IMR-90 (cell line): ENCODE measurements at regions of chr1 and their contacts with region 1.

Region 1: GRCh38 chr1:147640553-147641165 is 29.7 kb downstream of the ACP6 start:
- DNase-seq: peak; percentile 84
- ATAC-seq: peak; percentile 99
- H3K4me3 ChIP-seq: no peak overlapping the region
- H3K27ac ChIP-seq: no peak overlapping the region
- H3K4me1 ChIP-seq: no peaks in the 10 kb centered on the region
- H3K27me3 ChIP-seq: no peaks in the 10 kb centered on the region
- CTCF ChIP-seq: peak; percentile 94
- POLR2A ChIP-seq: no peak
- RAD21 ChIP-seq: peak; percentile 66

Region 2: DNA sequence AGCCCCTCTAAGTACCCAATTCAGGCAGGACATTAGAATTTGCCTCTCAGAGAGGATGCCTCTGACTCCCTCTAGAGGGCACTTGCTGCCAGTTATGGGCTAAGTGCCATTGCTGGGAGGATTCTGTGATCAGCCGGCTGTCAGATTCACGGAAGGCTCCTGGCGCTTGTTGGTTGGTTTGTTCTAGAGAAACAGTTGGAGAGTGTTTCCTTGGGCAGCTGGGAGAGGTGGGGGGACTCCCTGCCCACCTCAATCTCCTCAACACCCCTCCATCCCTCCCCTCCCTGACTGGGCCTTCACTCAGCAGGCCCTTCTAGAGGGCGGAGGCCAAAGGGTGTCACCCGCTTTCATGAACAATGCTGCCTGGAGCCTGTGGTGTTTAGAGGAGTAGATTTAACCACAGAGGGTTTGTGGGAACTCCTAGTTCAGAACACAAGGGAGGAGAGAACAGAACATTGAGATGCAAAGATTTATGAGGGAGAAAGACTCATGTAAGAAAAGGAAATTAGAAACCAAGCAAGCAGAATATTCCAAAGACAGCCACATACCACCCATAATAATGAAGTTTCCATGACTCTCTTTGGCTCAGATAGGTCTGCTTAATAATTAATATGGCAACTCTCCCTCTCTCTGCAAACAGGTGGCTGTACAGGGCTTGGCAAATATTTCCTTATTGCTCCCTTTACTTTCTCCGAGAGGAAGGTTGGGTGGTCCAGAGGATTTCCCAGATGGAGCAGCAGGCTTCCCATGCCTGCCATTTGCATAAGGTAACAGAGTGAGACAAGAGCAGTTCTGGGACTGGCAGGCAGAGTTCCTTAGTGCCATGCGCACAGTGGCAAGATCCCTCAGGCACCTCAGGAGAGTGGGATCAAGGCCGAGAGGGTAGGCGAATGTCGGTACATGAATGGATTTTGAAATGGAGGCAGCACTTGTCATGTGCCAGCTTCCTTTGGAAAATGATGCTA is 59.7 kb after region 1 on chr1:
- CTCF ChIA-PET with region 1: interaction called, 3 read pairs
- POLR2A ChIA-PET with region 1: no interaction called
- dilution Hi-C with region 1: no loop called
- in situ Hi-C with region 1: no loop called
- intact Hi-C with region 1: loop called (anchors 1 kb)
- DNase-seq: peak; percentile 64
- ATAC-seq: peak; percentile 91
- H3K4me3 ChIP-seq: no peak overlapping the region
- H3K27ac ChIP-seq: no peak overlapping the region
- H3K4me1 ChIP-seq: no peaks in the 10 kb centered on the region
- H3K27me3 ChIP-seq: peaks cover 4% of the 10 kb centered on the region
- CTCF ChIP-seq: peak; percentile 85
- POLR2A ChIP-seq: no peak
- RAD21 ChIP-seq: peak; percentile 72

Region 3: DNA sequence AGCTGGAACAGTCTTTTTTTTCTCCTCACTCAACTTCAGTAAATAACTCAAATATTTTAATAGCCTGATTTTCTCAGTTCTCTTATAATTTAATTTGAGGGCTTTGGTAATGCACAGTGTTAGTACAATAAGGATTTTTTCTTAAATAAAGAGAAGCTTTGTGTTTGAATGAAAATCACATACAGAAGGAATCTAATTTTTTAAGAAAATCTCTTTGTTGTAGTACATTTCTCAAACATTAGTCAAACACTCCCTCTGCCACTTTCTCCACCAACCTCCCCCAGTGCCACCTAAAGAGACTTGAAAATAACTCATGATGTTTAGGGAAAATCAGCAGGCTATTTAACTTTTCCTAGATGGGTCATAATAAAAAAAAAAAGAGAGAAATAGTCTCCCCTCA is 71.9 kb after region 1 on chr1:
- CTCF ChIA-PET with region 1: no interaction called
- POLR2A ChIA-PET with region 1: no interaction called
- dilution Hi-C with region 1: no loop called
- in situ Hi-C with region 1: no loop called
- intact Hi-C with region 1: no loop called
- DNase-seq: no peak
- ATAC-seq: no peak
- H3K4me3 ChIP-seq: no peak overlapping the region
- H3K27ac ChIP-seq: no peak overlapping the region
- H3K4me1 ChIP-seq: no peaks in the 10 kb centered on the region
- H3K27me3 ChIP-seq: no peaks in the 10 kb centered on the region
- CTCF ChIP-seq: no peak
- POLR2A ChIP-seq: no peak
- RAD21 ChIP-seq: no peak